Endothelial cell of umbilical vein (primary cell): ENCODE measurements at regions of chr6 and their contacts with region 1.

Region 1: GRCh38 chr6:13873285-13874190 is 51.2 kb upstream of the RNF182 start:
- DNase-seq: peak; percentile 18
- H3K4me3 ChIP-seq: peak overlapping the region in 1 of 3 experiments; percentile 17
- H3K27ac ChIP-seq: no peak overlapping the region
- H3K4me1 ChIP-seq: no peaks in the 10 kb centered on the region
- H3K27me3 ChIP-seq: peaks cover 2 to 4% of the 10 kb centered on the region in 2 experiments
- CTCF ChIP-seq: peak; percentile 67 to 79
- POLR2A ChIP-seq: no peak

Region 2: GRCh38 chr6:12572896-12573827 is 1300.4 kb before region 1 on chr6:
- CTCF ChIA-PET with region 1: no interaction called
- POLR2A ChIA-PET with region 1: no interaction called
- dilution Hi-C with region 1: no loop called
- intact Hi-C with region 1: no loop called
- DNase-seq: peak; percentile 92
- H3K4me3 ChIP-seq: peak overlapping the region in 1 of 3 experiments; percentile 13
- H3K27ac ChIP-seq: peak overlapping the region; percentile 92
- H3K4me1 ChIP-seq: peaks cover 75% of the 10 kb centered on the region
- H3K27me3 ChIP-seq: no peaks in the 10 kb centered on the region
- CTCF ChIP-seq: no peak
- POLR2A ChIP-seq: no peak

Region 3: DNA sequence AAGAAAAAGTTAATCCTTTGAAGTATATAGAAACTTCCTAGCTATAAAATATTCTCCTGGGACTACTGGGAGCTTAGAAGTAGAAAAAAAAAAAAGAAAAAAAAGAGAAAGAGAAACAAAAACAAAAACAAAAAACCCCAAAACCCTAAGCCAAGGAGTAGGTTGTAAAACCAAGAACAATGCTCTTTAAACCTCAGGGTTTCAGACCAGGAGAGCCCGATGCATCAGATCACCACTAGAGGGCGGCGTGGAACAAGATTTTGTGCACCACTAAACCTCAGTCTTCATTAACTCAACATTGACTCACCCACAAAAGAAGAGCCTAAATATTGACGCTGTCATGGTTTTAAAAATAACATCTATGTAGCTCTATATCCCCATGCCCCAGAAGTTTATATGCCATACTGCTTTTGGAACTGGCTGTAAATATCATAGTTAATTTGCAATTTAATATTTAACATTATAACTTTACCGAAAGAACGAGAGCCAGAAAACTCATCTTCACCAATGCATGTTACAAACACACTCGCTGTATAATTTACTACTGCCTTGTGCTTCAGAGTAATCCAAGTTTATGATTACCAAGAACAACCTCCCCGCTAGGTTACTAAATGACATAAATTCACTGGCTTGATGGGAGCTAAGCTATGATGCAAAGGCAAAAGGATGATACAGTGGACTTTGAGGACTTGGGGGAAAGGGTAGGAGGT is 78.3 kb before region 1 on chr6:
- CTCF ChIA-PET with region 1: interaction called, 4 read pairs
- POLR2A ChIA-PET with region 1: no interaction called
- dilution Hi-C with region 1: no loop called
- intact Hi-C with region 1: loop called (anchors 1 kb)
- DNase-seq: peak; percentile 75
- H3K4me3 ChIP-seq: no peak overlapping the region
- H3K27ac ChIP-seq: peak overlapping the region; percentile 38
- H3K4me1 ChIP-seq: peaks cover 10% of the 10 kb centered on the region
- H3K27me3 ChIP-seq: no peaks in the 10 kb centered on the region
- CTCF ChIP-seq: peak; percentile 89 to 96
- POLR2A ChIP-seq: no peak